ENCODE measurements at regions of chr4 and their contacts with region 1.

Region 1: GRCh38 chr4:107719922-107720722 is at the start of gene PAPSS1:
- DNase-seq: peak; percentile 94 to 97 (median 95)
- H3K4me3 ChIP-seq: peak within 1 kb of the TSS; percentile 83 to 88 (median 87)
- H3K4me3 Mint-ChIP-seq: peak within 1 kb of the TSS; percentile 95 to 97
- H3K27ac ChIP-seq: peak within 1 kb of the TSS; percentile 79 to 81
- H3K27ac Mint-ChIP-seq: peak within 1 kb of the TSS; percentile 91 to 97 (median 94)
- H3K4me1 ChIP-seq: peaks cover 25 to 37% of the 10 kb centered on the region in 2 donors
- H3K4me1 Mint-ChIP-seq: peaks cover 35% of the 10 kb centered on the region
- H3K27me3 ChIP-seq: no peaks in the 10 kb centered on the region
- H3K27me3 Mint-ChIP-seq: peaks cover 3 to 9% (median 6%) of the 10 kb centered on the region in 3 donors
- CTCF ChIP-seq: no peak
- polyA plus RNA-seq, gene PAPSS1: 46.4 to 79.6 (median 64.8) TPM

Region 2: GRCh38 chr4:107838861-107839565 is 118.9 kb after region 1 on chr4:
- intact Hi-C with region 1: loop called in 1 of 2 experiments (anchors 10 kb)
- DNase-seq: peak; percentile 42 to 80 (median 68)
- H3K4me3 ChIP-seq: peak overlapping the region in 2 of 3 experiments; percentile 34 to 62
- H3K4me3 Mint-ChIP-seq: no peak overlapping the region
- H3K27ac ChIP-seq: peak overlapping the region; percentile 59 to 88
- H3K27ac Mint-ChIP-seq: no peak overlapping the region
- H3K4me1 ChIP-seq: peaks cover 84 to 97% of the 10 kb centered on the region in 2 donors
- H3K4me1 Mint-ChIP-seq: peaks cover 56% of the 10 kb centered on the region
- H3K27me3 ChIP-seq: no peaks in the 10 kb centered on the region
- H3K27me3 Mint-ChIP-seq: peaks cover 0 to 1% (median 0%) of the 10 kb centered on the region in 3 donors
- CTCF ChIP-seq: no peak